Calu3 (cell line): ENCODE measurements at regions of chr1 and their contacts with region 1.

Region 1: GRCh38 chr1:170225781-170226530 is 80.2 kb downstream of the NTMT2 start:
- DNase-seq: no peak
- H3K4me3 Mint-ChIP-seq: no peak overlapping the region
- H3K27ac Mint-ChIP-seq: no peak overlapping the region
- H3K4me1 Mint-ChIP-seq: no peaks in the 10 kb centered on the region
- H3K27me3 Mint-ChIP-seq: no peaks in the 10 kb centered on the region
- CTCF ChIP-seq: no peak

Region 2: DNA sequence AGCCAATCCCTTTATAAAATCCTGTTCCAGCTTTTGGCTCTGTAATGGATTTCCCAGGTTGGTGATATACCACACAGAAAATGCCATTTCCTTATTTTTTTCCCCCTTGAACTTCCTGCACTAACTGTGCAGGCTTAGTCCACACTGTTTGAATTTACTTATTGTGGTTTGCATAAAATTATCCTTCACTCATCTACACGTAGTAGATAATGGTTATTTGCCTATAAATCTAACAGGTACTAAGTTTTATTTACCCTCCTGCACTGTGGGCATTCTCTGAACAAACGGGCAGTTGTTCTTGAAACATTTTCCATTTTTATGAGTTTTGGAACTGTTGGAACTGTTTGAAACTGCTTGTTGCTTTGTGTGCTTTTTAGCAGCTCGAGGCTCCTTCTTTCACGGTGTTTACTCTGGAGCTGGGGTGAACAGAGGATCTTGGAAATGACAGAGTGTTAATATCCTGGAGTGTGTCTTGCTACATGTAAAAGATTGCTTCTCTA is 128.5 kb before region 1 on chr1:
- CTCF ChIA-PET with region 1: no interaction called
- intact Hi-C with region 1: loop called (anchors 5 kb)
- DNase-seq: no peak
- H3K4me3 Mint-ChIP-seq: no peak overlapping the region
- H3K27ac Mint-ChIP-seq: no peak overlapping the region
- H3K4me1 Mint-ChIP-seq: no peaks in the 10 kb centered on the region
- H3K27me3 Mint-ChIP-seq: no peaks in the 10 kb centered on the region
- CTCF ChIP-seq: no peak

Region 3: GRCh38 chr1:170214117-170215032 is 11.6 kb before region 1 on chr1:
- CTCF ChIA-PET with region 1: no interaction called
- intact Hi-C with region 1: no loop called
- DNase-seq: no peak
- H3K4me3 Mint-ChIP-seq: no peak overlapping the region
- H3K27ac Mint-ChIP-seq: no peak overlapping the region
- H3K4me1 Mint-ChIP-seq: no peaks in the 10 kb centered on the region
- H3K27me3 Mint-ChIP-seq: peaks cover 21% of the 10 kb centered on the region
- CTCF ChIP-seq: no peak

Region 4: GRCh38 chr1:170296642-170297041 is 70.7 kb after region 1 on chr1:
- CTCF ChIA-PET with region 1: no interaction called
- intact Hi-C with region 1: no loop called
- DNase-seq: peak; percentile 18
- H3K4me3 Mint-ChIP-seq: no peak overlapping the region
- H3K27ac Mint-ChIP-seq: peak overlapping the region; percentile 17
- H3K4me1 Mint-ChIP-seq: peaks cover 12% of the 10 kb centered on the region
- H3K27me3 Mint-ChIP-seq: no peaks in the 10 kb centered on the region
- CTCF ChIP-seq: no peak